SK-N-SH (cell line): ENCODE measurements at regions of chr15 and their contacts with region 1.

Region 1: GRCh38 chr15:89003865-89004725 is 84.2 kb upstream of the ABHD2 start:
- DNase-seq: peak; percentile 65
- H3K4me3 ChIP-seq: no peak overlapping the region
- H3K27ac ChIP-seq: no peak overlapping the region
- H3K4me1 ChIP-seq: peaks cover 6 to 7% of the 10 kb centered on the region in 2 experiments; a peak in 1 of 4 replicates
- H3K27me3 ChIP-seq: no peaks in the 10 kb centered on the region
- CTCF ChIP-seq: peak; percentile 43
- EP300 ChIP-seq: no peak
- RAD21 ChIP-seq: peak; percentile 59

Region 2: DNA sequence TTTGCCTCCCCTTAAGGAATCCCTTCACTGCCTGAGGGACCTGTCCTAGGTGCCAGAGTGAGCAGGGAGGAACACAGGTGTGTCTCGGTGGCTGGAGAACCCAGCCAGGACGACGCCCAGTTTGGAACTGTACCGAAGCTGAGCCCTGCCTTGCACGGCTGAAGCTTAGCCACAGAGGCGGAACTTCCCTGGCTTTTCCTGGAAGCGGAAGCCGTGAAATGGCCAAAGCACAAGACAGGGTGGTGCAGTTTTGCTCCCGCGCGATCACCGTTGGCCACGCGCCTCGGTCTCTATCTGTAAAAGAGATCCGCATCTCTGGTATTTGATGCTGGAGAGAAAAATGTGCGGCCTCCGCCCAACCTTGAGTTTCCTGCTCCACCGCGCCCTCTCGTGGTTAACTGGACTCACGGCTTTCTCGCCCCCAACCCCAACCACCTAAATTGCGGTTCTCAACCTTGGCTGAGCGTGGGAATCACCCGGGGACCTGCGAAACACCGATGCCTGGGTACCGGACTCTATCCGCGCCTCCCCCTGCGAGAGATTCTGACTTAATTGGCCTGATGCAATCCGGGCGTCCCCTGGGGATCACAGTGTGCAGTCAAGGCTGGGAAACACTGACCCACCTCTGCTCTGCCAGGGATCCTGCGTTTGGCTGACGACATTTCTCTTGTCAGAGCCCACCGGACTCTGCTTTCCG is 13.4 kb after region 1 on chr15:
- CTCF ChIA-PET with region 1: interaction called, 10 read pairs
- POLR2A ChIA-PET with region 1: no interaction called
- DNase-seq: peak; percentile 84
- H3K4me3 ChIP-seq: peak overlapping the region; percentile 37 to 57
- H3K27ac ChIP-seq: no peak overlapping the region
- H3K4me1 ChIP-seq: peaks cover 0 to 11% of the 10 kb centered on the region in 2 experiments; a peak in 1 of 4 replicates
- H3K27me3 ChIP-seq: no peaks in the 10 kb centered on the region; the same call in 1 of the 2 replicates
- CTCF ChIP-seq: peak; percentile 95
- EP300 ChIP-seq: no peak
- RAD21 ChIP-seq: peak; percentile 77

Region 3: DNA sequence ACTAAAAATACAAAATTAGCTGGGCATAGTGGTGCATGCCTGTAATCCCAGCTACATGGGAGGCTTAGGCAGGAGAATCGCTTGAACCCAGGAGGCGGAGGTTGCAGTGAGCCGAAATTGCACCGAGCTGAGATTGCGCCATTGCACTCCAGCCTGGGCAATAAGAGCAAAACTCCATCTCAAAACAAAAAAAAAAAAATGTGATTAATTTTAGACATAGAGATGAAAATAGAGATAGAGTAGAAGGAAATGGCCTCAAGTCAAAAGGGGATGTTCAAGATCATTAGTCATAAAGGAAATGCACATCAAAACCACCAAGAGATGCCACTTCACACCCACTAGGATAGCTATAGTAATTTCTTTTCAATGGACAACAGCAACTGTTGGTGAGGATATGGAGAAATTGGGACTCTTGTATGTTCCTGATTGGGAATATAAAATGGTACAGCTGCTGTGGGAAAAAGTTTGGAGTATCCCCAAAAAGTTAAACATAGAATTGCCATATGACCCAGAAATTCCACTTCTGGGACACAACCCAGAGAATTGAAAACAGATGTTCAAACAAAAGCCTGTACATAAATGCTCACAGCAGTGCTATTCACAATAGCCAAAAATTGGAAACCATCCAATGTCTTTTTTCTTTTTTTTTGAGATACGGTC is 139.5 kb after region 1 on chr15:
- CTCF ChIA-PET with region 1: no interaction called
- POLR2A ChIA-PET with region 1: no interaction called
- DNase-seq: peak; percentile 36
- H3K4me3 ChIP-seq: peak overlapping the region in 1 of 2 experiments; percentile 18; a peak in 1 of 4 replicates
- H3K27ac ChIP-seq: peak overlapping the region; percentile 77 to 96; a peak in 3 of 4 replicates
- H3K4me1 ChIP-seq: peaks cover 19 to 46% of the 10 kb centered on the region in 2 experiments
- H3K27me3 ChIP-seq: no peaks in the 10 kb centered on the region
- CTCF ChIP-seq: no peak
- EP300 ChIP-seq: peak; percentile 26 to 54
- RAD21 ChIP-seq: no peak

Region 4: GRCh38 chr15:89184357-89184756 is 180.3 kb after region 1 on chr15:
- CTCF ChIA-PET with region 1: no interaction called
- POLR2A ChIA-PET with region 1: no interaction called
- DNase-seq: no peak
- H3K4me3 ChIP-seq: no peak overlapping the region
- H3K27ac ChIP-seq: no peak overlapping the region
- H3K4me1 ChIP-seq: no peaks in the 10 kb centered on the region; a peak in 1 of 4 replicates
- H3K27me3 ChIP-seq: no peaks in the 10 kb centered on the region
- CTCF ChIP-seq: no peak
- EP300 ChIP-seq: no peak
- RAD21 ChIP-seq: no peak